Astrocyte of the cerebellum (primary cell): ENCODE measurements at regions of chr20 and their contacts with region 1.

Region 1: DNA sequence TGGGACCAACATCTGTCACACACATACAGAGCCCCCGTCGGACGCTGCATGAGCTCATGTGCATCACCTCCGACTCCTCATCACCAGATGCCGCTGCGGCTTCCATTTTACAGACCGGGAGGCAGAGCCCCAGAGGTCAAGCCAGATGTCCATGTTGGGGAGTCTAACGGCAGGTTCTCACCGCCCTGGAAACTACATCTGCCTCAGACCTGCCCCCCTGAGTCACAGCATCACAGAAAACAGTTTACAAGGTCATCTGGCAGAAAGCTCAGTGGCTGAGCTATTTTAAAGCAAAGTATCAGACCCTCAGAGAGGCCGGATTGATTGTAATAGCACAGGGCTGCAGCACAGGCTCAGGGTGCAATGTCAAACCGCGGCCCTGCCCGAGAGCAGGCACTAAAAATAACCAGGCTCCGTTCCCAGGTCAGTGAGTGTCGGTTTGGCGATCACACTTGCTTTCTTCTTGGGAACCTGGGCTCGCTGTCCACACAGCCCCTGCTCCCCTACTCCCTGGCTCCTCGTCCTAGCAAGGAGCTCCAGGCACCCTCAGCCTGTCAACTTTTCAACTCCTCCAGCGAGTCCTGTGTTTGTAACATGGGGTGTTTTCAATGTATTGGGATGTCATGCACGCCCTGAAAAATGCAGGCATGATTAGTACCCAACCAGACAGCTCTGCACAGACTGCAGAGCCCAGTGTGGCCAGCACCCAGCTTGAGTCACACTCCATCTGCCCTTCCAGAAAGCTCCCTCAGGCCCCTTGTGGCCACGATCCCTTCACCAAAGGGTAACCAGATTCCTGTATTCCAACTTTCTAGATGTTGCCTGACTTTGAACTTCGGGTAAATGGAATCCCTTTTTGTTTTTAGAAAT is 264.5 kb downstream of the CDH4 start:
- DNase-seq: no peak
- H3K4me3 ChIP-seq: no peak overlapping the region
- CTCF ChIP-seq: no peak

Region 2: GRCh38 chr20:61387204-61387952 is 129.2 kb before region 1 on chr20:
- in situ Hi-C with region 1: no loop called
- DNase-seq: peak; percentile 6
- H3K4me3 ChIP-seq: no peak overlapping the region
- CTCF ChIP-seq: no peak

Region 3: GRCh38 chr20:61482056-61482887 is 34.3 kb before region 1 on chr20:
- in situ Hi-C with region 1: loop called (anchors 5 kb)
- DNase-seq: no peak
- H3K4me3 ChIP-seq: no peak overlapping the region
- CTCF ChIP-seq: no peak

Region 4: GRCh38 chr20:61588411-61589386 is 72.1 kb after region 1 on chr20:
- in situ Hi-C with region 1: no loop called
- DNase-seq: peak; percentile 82
- H3K4me3 ChIP-seq: peak overlapping the region; percentile 19
- CTCF ChIP-seq: no peak

Region 5: GRCh38 chr20:61599061-61599531 is 82.5 kb after region 1 on chr20:
- in situ Hi-C with region 1: loop called (anchors 5 kb)
- DNase-seq: no peak
- H3K4me3 ChIP-seq: no peak overlapping the region
- CTCF ChIP-seq: no peak